ENCODE measurements at regions of chr12 and their contacts with region 1.

Region 1: GRCh38 chr12:6434205-6435140 is 10.3 kb upstream of the CD27 start:
- DNase-seq: peak in 5 of 9 experiments; percentile 44 to 73 (median 57)
- ATAC-seq: peak; percentile 83
- H3K4me3 ChIP-seq: peak overlapping the region in 1 of 2 experiments; percentile 38
- H3K4me3 Mint-ChIP-seq: peak overlapping the region; percentile 66
- H3K27ac ChIP-seq: peak overlapping the region; percentile 31 to 74
- H3K27ac Mint-ChIP-seq: peak overlapping the region; percentile 93
- H3K4me1 ChIP-seq: peaks cover 33% of the 10 kb centered on the region
- H3K4me1 Mint-ChIP-seq: peaks cover 48% of the 10 kb centered on the region
- H3K27me3 ChIP-seq: no peaks in the 10 kb centered on the region
- H3K27me3 Mint-ChIP-seq: no peaks in the 10 kb centered on the region
- CTCF ChIP-seq: no peak

Region 2: DNA sequence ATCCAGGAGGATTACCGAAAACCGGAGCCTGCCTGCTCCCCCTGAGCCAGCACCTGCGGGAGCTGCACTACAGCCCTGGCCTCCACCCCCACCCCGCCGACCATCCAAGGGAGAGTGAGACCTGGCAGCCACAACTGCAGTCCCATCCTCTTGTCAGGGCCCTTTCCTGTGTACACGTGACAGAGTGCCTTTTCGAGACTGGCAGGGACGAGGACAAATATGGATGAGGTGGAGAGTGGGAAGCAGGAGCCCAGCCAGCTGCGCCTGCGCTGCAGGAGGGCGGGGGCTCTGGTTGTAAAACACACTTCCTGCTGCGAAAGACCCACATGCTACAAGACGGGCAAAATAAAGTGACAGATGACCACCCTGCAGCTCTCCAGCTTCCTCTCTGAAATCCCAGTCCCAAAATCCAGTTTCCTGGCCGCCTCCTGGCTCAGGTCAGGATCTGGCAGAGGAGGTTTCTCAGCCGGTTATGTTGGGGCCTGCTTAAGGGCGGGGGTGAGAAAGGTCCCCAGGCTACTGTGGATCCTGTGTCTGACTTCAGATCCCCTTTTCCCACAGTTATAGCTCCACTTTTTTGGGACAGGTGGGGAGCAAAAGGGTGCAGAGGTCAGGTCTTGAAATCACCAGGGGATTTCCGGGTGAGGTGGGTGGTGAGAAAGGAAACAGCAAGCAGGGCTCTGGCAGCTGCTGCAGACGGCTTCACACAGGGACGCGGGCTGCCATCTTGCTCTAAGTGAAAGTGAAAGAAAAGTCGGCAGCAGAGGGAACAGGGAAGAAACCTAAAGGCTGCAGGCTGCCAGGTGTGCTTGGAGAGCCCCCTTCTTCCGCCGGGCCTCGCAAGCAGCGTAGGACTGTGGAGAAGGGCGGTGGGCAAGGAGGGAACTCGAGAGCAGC is 17.1 kb after region 1 on chr12 and contains the start of gene TAPBPL:
- CTCF ChIA-PET with region 1: interaction called, 4 read pairs
- POLR2A ChIA-PET with region 1: interaction called, 315 read pairs
- intact Hi-C with region 1: no loop called
- DNase-seq: peak; percentile 50 to 96 (median 79)
- ATAC-seq: peak; percentile 88
- H3K4me3 ChIP-seq: peak within 1 kb of the TSS; percentile 68 to 82
- H3K4me3 Mint-ChIP-seq: peak within 1 kb of the TSS; percentile 99
- H3K27ac ChIP-seq: peak within 1 kb of the TSS; percentile 85 to 95
- H3K27ac Mint-ChIP-seq: peak within 1 kb of the TSS; percentile 99
- H3K4me1 ChIP-seq: peaks cover 63% of the 10 kb centered on the region
- H3K4me1 Mint-ChIP-seq: peaks cover 82% of the 10 kb centered on the region
- H3K27me3 ChIP-seq: no peaks in the 10 kb centered on the region
- H3K27me3 Mint-ChIP-seq: no peaks in the 10 kb centered on the region
- CTCF ChIP-seq: no peak
- total RNA-seq, gene TAPBPL: 11.8 to 12.2 TPM